ENCODE measurements at regions of chr17 and their contacts with region 1.

Region 1: GRCh38 chr17:19648475-19649406 is at the start of gene ALDH3A2:
- DNase-seq: peak; percentile 99
- ATAC-seq: peak; percentile 89 to 94
- H3K4me3 ChIP-seq: peak within 1 kb of the TSS; percentile 82
- H3K27ac ChIP-seq: peak within 1 kb of the TSS; percentile 95 to 96
- H3K4me1 ChIP-seq: peaks cover 67% of the 10 kb centered on the region
- CTCF ChIP-seq: peak; percentile 26; the same call in 1 of the 3 replicates
- EP300 ChIP-seq: no peak; a peak in 1 of 5 replicates
- POLR2A ChIP-seq: peak; percentile 77
- RAD21 ChIP-seq: peak; percentile 35 to 54; a peak in 4 of 5 replicates
- polyA plus RNA-seq, gene ALDH3A2: 195 and 225 TPM in 2 replicates

Region 2: GRCh38 chr17:19377602-19378392 is 270.9 kb before region 1 on chr17:
- CTCF ChIA-PET with region 1: no interaction called
- POLR2A ChIA-PET with region 1: interaction called, 18 read pairs
- DNase-seq: peak; percentile 100
- ATAC-seq: peak; percentile 86 to 90
- H3K4me3 ChIP-seq: peak overlapping the region; percentile 80
- H3K27ac ChIP-seq: peak overlapping the region; percentile 90 to 91
- H3K4me1 ChIP-seq: peaks cover 16% of the 10 kb centered on the region
- CTCF ChIP-seq: no peak
- EP300 ChIP-seq: no peak
- POLR2A ChIP-seq: peak; percentile 52; the same call in 1 of the 2 replicates
- RAD21 ChIP-seq: no peak

Region 3: GRCh38 chr17:19579867-19580565 is 68.7 kb before region 1 on chr17:
- CTCF ChIA-PET with region 1: interaction called, 3 read pairs
- POLR2A ChIA-PET with region 1: interaction called, 11 read pairs
- DNase-seq: no peak
- ATAC-seq: no peak
- H3K4me3 ChIP-seq: no peak overlapping the region
- H3K27ac ChIP-seq: no peak overlapping the region
- H3K4me1 ChIP-seq: no peaks in the 10 kb centered on the region
- CTCF ChIP-seq: no peak
- EP300 ChIP-seq: no peak
- POLR2A ChIP-seq: no peak
- RAD21 ChIP-seq: no peak

Region 4: DNA sequence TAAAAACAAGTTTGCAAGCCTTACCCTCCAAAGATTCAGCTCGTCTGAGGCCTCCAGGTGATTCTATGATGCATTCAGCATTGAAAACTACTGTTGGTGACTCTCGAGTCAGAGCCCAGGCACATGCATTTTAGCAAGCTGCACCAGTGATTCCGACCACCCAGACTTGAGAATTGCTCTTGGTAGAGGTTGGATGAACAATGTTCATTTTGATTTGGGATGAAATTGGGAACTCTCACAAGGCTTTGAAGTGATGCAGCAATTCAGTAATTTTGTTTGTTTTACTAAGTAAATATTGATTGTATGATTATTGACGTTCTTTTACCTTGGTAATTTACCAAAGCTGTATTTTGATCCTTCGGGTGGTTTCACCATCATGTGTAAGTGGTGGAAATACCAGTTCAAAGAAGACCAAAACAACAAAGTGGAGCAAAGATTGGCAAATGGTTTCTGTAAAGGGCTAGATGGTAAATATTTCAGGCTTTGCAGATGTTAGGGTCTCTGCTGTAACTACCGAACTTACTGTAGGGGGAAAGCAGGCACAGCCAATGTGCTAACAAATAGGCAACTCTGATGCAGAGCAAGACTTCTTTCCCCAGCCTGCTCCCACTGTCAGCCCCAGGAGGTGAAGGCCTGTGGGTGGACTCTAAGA is 11.6 kb after region 1 on chr17:
- CTCF ChIA-PET with region 1: interaction called, 14 read pairs
- POLR2A ChIA-PET with region 1: interaction called, 28 read pairs
- DNase-seq: no peak
- ATAC-seq: peak; percentile 21 to 37; a peak in 1 of 6 replicates
- H3K4me3 ChIP-seq: no peak overlapping the region
- H3K27ac ChIP-seq: peak overlapping the region in 1 of 2 experiments; percentile 29; a peak in 3 of 6 replicates
- H3K4me1 ChIP-seq: peaks cover 29% of the 10 kb centered on the region
- CTCF ChIP-seq: no peak
- EP300 ChIP-seq: no peak
- POLR2A ChIP-seq: no peak
- RAD21 ChIP-seq: no peak

Region 5: GRCh38 chr17:19718604-19719354 is 70.0 kb after region 1 on chr17:
- CTCF ChIA-PET with region 1: interaction called, 11 read pairs
- POLR2A ChIA-PET with region 1: interaction called, 10 read pairs
- DNase-seq: peak in 1 of 2 experiments; percentile 65
- ATAC-seq: peak; percentile 40 to 67
- H3K4me3 ChIP-seq: no peak overlapping the region
- H3K27ac ChIP-seq: peak overlapping the region; percentile 49 to 82
- H3K4me1 ChIP-seq: peaks cover 57% of the 10 kb centered on the region
- CTCF ChIP-seq: peak; percentile 43
- EP300 ChIP-seq: no peak
- POLR2A ChIP-seq: no peak
- RAD21 ChIP-seq: peak; percentile 62 to 75

Region 6: GRCh38 chr17:19733953-19734526 is 85.3 kb after region 1 on chr17:
- CTCF ChIA-PET with region 1: interaction called, 4 read pairs
- POLR2A ChIA-PET with region 1: interaction called, 18 read pairs
- DNase-seq: no peak
- ATAC-seq: peak in 1 of 2 experiments; percentile 12; a peak in 2 of 6 replicates
- H3K4me3 ChIP-seq: no peak overlapping the region
- H3K27ac ChIP-seq: peak overlapping the region; percentile 0 to 68; a peak in 4 of 6 replicates
- H3K4me1 ChIP-seq: peaks cover 49% of the 10 kb centered on the region
- CTCF ChIP-seq: no peak
- EP300 ChIP-seq: no peak
- POLR2A ChIP-seq: no peak
- RAD21 ChIP-seq: no peak

Region 7: GRCh38 chr17:19753049-19753444 is 104.3 kb after region 1 on chr17:
- CTCF ChIA-PET with region 1: interaction called, 26 read pairs
- POLR2A ChIA-PET with region 1: interaction called, 98 read pairs
- DNase-seq: peak; percentile 98 to 99
- ATAC-seq: peak; percentile 83 to 90
- H3K4me3 ChIP-seq: no peak overlapping the region; the same call in 2 of the 3 replicates
- H3K27ac ChIP-seq: peak overlapping the region; percentile 98 to 100
- H3K4me1 ChIP-seq: peaks cover 65% of the 10 kb centered on the region
- CTCF ChIP-seq: no peak
- EP300 ChIP-seq: peak; percentile 87 to 96; a peak in 4 of 5 replicates
- POLR2A ChIP-seq: peak; percentile 54
- RAD21 ChIP-seq: peak in 1 of 2 experiments; percentile 41; a peak in 2 of 5 replicates

Measured in A549 (cell line).